WTC11 (cell line): ENCODE measurements at regions of chr2 and their contacts with region 1.

Region 1: DNA sequence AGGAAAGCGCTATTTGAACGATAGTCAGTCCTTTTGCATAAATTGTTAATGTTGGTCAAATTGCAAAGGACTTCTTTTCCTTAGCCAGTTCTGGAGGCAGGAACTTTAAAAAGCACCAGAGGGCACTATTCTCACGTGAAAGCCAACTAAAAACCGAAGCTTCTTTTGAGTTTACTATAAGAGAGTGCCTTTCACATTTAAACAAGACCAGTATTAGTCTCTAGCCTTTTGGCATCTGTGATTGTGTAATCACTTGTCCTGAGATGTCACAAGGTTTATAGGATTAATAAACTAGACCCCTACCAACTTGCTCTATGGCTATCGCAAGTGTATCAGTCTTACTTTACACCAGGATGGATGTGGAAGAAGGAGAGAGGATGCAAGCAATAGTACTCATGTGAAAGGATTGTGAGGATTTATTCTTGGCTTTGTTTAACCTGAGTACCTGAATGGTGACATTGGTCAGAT is 14.4 kb upstream of the STAT4 start:
- DNase-seq: no peak
- ATAC-seq: peak; percentile 90
- H3K4me3 Mint-ChIP-seq: no peak overlapping the region
- H3K27ac Mint-ChIP-seq: no peak overlapping the region
- H3K4me1 Mint-ChIP-seq: peaks cover 7% of the 10 kb centered on the region
- H3K27me3 Mint-ChIP-seq: peaks cover 11% of the 10 kb centered on the region
- CTCF ChIP-seq: peak; percentile 38

Region 2: DNA sequence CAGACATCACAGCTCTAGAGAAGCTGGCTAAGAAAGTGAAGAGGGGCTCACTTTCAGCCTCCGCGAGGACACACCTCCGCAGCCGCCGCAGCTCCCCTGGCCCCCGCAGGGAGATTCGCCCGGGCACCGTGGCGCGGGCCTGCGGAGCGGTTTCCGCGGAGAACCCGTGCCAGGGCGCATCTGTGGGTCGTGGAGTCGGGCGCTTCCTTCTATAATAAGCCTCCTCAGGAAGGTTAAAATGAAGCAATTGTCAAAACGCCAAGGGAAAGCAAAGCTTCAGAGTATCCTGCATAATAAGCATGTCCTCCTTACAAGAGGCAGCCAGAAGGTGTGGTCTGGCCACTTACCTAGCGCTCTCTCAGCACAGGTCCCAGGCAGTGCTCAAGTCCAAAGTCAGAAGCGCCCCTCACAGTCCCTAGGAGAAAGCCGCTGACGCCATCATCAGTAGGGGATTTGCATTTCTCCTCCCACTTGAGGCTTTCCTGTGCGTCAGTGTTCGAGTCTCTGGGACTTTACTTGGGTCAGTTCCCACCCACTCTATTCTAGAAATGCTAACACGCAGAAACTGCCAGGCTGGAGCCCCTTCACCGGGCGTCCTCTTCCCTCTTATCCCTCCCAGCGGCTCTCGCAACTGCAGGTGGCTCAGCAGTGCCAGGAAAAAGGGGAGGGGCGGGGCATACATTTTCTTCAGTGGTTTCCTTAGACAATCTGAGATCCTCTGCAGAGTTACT is 14.4 kb before region 1 on chr2 and contains the start of gene STAT4:
- CTCF ChIA-PET with region 1: interaction called, 15 read pairs
- POLR2A ChIA-PET with region 1: no interaction called
- DNase-seq: peak; percentile 59
- ATAC-seq: peak; percentile 97
- H3K4me3 Mint-ChIP-seq: peak within 1 kb of the TSS; percentile 74
- H3K27ac Mint-ChIP-seq: no peak within 1 kb of the TSS
- H3K4me1 Mint-ChIP-seq: peaks cover 8% of the 10 kb centered on the region
- H3K27me3 Mint-ChIP-seq: peaks cover 17% of the 10 kb centered on the region
- CTCF ChIP-seq: no peak
- total RNA-seq, gene STAT4: 0.44 to 0.76 TPM (median 0.44 TPM) in 3 replicates

Region 3: GRCh38 chr2:191515551-191515950 is 350.3 kb after region 1 on chr2:
- CTCF ChIA-PET with region 1: interaction called, 3 read pairs
- POLR2A ChIA-PET with region 1: interaction called, 15 read pairs
- DNase-seq: no peak
- ATAC-seq: no peak
- H3K4me3 Mint-ChIP-seq: no peak overlapping the region
- H3K27ac Mint-ChIP-seq: no peak overlapping the region
- H3K4me1 Mint-ChIP-seq: peaks cover 6% of the 10 kb centered on the region; the same call in 1 of the 2 replicates
- H3K27me3 Mint-ChIP-seq: no peaks in the 10 kb centered on the region
- CTCF ChIP-seq: no peak

Region 4: DNA sequence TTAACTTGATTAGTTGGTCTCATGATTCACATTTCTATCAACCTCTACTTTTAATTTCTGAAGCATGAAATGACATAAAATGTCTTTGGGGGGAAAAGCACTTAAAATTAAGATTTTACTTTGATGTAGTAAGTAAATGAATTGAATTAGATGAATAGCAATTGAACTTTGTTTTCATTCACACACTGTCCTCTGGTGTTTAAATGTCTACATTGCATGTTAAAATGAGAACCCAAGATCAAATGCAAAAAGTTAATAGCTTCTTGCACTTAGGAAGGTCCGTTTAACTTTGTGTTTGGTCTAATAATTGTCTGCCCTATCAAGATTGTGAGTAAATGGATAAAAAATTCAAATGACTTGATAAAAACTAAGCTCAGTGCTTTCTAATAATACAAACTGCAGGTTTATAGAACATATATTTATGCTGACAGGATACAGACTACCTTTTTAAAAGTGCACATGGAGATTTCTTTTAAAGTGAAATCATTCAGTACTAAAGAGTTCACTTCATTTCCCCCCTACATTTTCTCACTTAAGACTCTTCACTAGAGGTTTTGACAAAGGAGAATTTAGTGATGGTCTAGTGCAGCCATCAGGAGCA is 356.5 kb after region 1 on chr2:
- CTCF ChIA-PET with region 1: interaction called, 19 read pairs
- POLR2A ChIA-PET with region 1: no interaction called
- DNase-seq: no peak
- ATAC-seq: no peak
- H3K4me3 Mint-ChIP-seq: no peak overlapping the region
- H3K27ac Mint-ChIP-seq: no peak overlapping the region
- H3K4me1 Mint-ChIP-seq: no peaks in the 10 kb centered on the region
- H3K27me3 Mint-ChIP-seq: no peaks in the 10 kb centered on the region
- CTCF ChIP-seq: peak; percentile 50; the same call in 1 of the 2 replicates